AG04449 (cell line): ENCODE measurements at regions of chr17 and their contacts with region 1.

Region 1: GRCh38 chr17:7323731-7324437 is 5.3 kb downstream of the NEURL4 start:
- DNase-seq: no peak
- H3K4me3 ChIP-seq: no peak overlapping the region
- CTCF ChIP-seq: peak; percentile 89

Region 2: DNA sequence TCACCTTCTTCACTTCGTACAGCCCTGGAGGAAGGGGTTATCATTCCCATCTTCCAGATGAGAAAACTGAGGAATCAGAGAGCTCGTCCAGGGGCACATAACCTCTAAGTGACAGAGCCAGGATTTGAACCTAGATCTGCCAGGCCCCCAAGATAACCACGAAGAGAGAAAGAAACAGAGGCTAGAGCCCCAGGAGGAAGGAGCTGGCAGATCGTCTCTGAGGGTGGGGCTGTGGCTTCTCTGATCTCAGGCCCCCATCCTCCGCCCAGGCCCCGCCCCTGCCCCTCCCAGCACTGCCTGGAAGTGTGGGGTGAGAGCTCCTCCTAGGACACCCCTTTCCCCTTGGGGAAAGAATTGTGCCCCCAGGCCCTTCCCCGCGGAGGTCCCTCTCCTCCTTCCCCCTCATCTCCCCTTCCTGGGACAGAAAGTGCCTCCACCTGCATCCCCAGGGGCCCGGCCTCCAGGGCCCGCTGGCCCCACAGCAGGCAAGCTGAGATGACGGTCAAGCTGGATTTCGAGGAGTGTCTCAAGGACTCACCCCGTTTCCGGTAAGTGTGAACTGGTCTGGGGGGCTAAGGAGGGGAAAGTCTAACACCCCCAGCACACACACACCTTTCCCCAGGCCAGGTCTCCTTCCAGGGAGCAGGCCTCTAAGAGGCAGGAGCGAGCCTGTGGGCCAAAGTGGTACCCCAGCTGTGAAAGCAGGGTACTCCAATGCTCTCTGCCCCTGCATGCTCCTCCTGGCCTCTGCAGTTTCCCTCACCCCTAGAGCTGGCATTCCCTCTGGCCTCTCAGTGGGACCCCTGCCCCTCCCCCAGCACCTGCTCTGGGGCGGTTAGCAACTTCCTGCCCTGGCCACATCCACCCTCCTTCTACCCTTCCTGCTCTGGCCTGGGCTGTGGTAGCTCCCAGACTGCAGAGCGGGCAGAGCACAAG is 12.6 kb after region 1 on chr17 and contains the start of gene ACAP1:
- CTCF ChIA-PET with region 1: interaction called, 30 read pairs
- POLR2A ChIA-PET with region 1: no interaction called
- DNase-seq: no peak
- H3K4me3 ChIP-seq: no peak within 1 kb of the TSS
- CTCF ChIP-seq: no peak

Region 3: GRCh38 chr17:7656958-7657609 is 333.2 kb after region 1 on chr17:
- CTCF ChIA-PET with region 1: no interaction called
- POLR2A ChIA-PET with region 1: no interaction called
- DNase-seq: no peak
- H3K4me3 ChIP-seq: no peak overlapping the region
- CTCF ChIP-seq: no peak